HepG2 (cell line): ENCODE measurements at regions of chr2 and their contacts with region 1.

Region 1: GRCh38 chr2:207847807-207848544 is 78.3 kb upstream of the FZD5 start:
- DNase-seq: peak; percentile 99
- ATAC-seq: peak; percentile 83
- H3K4me3 ChIP-seq: peak overlapping the region; percentile 13 to 27 (median 25); a peak in 3 of 6 replicates
- H3K27ac ChIP-seq: peak overlapping the region; percentile 97
- H3K4me1 ChIP-seq: peaks cover 81% of the 10 kb centered on the region
- H3K27me3 ChIP-seq: no peaks in the 10 kb centered on the region
- CTCF ChIP-seq: peak; percentile 52
- EP300 ChIP-seq: peak; percentile 75 to 97
- POLR2A ChIP-seq: peak in 1 of 2 experiments; percentile 47; a peak in 1 of 4 replicates
- RAD21 ChIP-seq: peak; percentile 22; the same call in 1 of the 2 replicates

Region 2: DNA sequence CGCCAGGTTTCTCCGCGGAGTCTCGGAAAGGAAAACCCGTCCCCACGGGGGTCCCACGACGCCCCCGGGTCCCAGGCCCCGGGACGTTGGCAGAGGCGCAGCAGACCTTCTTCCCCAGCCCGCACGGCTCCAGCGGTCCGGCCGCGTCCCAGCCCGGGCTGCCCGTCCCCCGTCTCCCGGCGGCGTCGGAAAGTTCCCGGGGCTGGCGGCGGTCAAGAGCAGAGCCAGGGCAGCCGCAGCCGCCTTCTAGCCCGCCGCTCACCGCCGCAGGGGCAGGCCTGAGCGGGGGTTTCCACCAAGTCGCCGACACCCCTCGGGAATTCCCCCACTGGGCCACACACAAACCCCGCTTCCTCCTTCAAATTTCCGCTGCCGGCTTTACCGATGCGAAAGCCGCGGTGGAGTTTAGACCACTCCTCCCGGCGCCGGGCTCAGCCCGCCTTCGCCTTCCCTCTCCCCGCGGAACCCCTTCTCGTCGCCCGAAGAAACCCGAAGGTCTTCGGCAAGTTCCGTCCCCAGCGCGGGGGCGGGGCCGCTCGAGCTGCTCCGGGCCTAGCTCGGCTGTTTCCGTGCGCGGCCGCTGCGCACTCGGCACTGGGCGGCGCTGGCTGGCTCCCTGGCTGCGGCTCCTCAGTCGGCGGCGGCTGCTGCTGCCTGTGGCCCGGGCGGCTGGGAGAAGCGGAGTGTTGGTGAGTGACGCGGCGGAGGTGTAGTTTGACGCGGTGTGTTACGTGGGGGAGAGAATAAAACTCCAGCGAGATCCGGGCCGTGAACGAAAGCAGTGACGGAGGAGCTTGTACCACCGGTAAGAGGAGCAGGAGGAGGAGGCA is 318.4 kb before region 1 on chr2 and contains the start of gene CREB1:
- CTCF ChIA-PET with region 1: no interaction called
- POLR2A ChIA-PET with region 1: no interaction called
- in situ Hi-C with region 1: no loop called
- intact Hi-C with region 1: loop called (anchors 10 kb)
- DNase-seq: peak; percentile 94
- ATAC-seq: peak; percentile 96
- H3K4me3 ChIP-seq: peak within 1 kb of the TSS; percentile 93 to 98 (median 94)
- H3K27ac ChIP-seq: peak within 1 kb of the TSS; percentile 96
- H3K4me1 ChIP-seq: peaks cover 44% of the 10 kb centered on the region
- H3K27me3 ChIP-seq: no peaks in the 10 kb centered on the region; a peak in 1 of 5 replicates
- CTCF ChIP-seq: peak; percentile 73
- EP300 ChIP-seq: no peak; a peak in 1 of 4 replicates
- POLR2A ChIP-seq: peak; percentile 90 to 94
- RAD21 ChIP-seq: peak; percentile 30
- total RNA-seq, gene CREB1: 51.9 and 79.5 TPM in 2 replicates

Region 3: DNA sequence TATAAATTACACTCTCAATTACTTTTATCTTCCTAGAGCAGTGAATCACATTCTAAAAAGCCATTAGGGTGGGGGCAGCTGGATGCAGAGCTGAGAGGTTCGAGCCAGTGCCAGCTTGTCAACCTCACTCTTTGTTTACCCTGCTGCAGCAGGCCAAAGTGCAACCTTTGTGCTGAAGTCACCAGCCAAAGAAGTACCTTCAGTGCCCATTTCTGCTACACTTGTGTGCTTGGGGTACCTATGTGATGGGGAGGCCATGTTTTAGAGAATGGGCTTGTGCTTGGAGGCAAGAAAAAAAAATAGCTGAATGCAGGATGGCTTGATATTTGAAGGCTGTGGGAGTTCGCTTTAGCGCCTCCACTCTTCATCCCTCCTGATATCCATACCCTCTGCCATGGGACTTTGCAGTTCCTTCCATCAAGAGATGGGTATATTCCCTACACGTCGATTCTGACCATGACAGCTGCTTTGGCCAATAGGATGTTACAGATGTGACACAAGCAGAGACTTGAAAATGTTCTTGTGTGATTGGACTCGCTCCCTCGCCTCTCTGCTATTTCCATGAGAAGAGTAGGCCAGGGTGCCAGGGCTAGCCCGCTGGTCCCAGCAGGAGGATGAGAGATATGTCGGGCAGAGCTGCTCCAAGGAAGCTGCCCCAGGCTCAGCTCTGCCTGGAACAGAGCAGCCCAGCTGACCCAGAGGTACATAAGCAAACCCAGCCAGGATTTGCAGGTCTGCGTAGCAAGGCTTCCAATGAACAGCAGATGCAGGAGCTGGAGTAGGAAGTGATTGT is 65.5 kb before region 1 on chr2:
- CTCF ChIA-PET with region 1: no interaction called
- POLR2A ChIA-PET with region 1: interaction called, 19 read pairs
- in situ Hi-C with region 1: no loop called
- intact Hi-C with region 1: no loop called
- DNase-seq: peak; percentile 92
- ATAC-seq: peak; percentile 96
- H3K4me3 ChIP-seq: no peak overlapping the region
- H3K27ac ChIP-seq: peak overlapping the region; percentile 1
- H3K4me1 ChIP-seq: peaks cover 96% of the 10 kb centered on the region
- H3K27me3 ChIP-seq: no peaks in the 10 kb centered on the region
- CTCF ChIP-seq: peak; percentile 13; the same call in 1 of the 2 replicates
- EP300 ChIP-seq: peak in 1 of 2 experiments; percentile 63; a peak in 2 of 4 replicates
- POLR2A ChIP-seq: no peak
- RAD21 ChIP-seq: peak; percentile 21; the same call in 1 of the 2 replicates

Region 4: GRCh38 chr2:207813221-207813916 is 34.6 kb before region 1 on chr2:
- CTCF ChIA-PET with region 1: no interaction called
- POLR2A ChIA-PET with region 1: interaction called, 288 read pairs
- in situ Hi-C with region 1: no loop called
- intact Hi-C with region 1: loop called (anchors 5 kb)
- DNase-seq: no peak
- ATAC-seq: 0 out of 3 replicates have a peak, but pooled peaks have one; percentile 6
- H3K4me3 ChIP-seq: no peak overlapping the region
- H3K27ac ChIP-seq: no peak overlapping the region
- H3K4me1 ChIP-seq: peaks cover 88% of the 10 kb centered on the region
- H3K27me3 ChIP-seq: no peaks in the 10 kb centered on the region
- CTCF ChIP-seq: no peak; the same call in 1 of the 2 replicates
- EP300 ChIP-seq: no peak
- POLR2A ChIP-seq: no peak
- RAD21 ChIP-seq: 0 out of 2 replicates have a peak, but pooled peaks have one; percentile 12

Region 5: GRCh38 chr2:207833251-207833751 is 14.7 kb before region 1 on chr2:
- CTCF ChIA-PET with region 1: no interaction called
- POLR2A ChIA-PET with region 1: interaction called, 303 read pairs
- in situ Hi-C with region 1: no loop called
- intact Hi-C with region 1: loop called (anchors 1 kb)
- DNase-seq: peak; percentile 87
- ATAC-seq: peak; percentile 33
- H3K4me3 ChIP-seq: no peak overlapping the region
- H3K27ac ChIP-seq: peak overlapping the region; percentile 16
- H3K4me1 ChIP-seq: peaks cover 80% of the 10 kb centered on the region
- H3K27me3 ChIP-seq: no peaks in the 10 kb centered on the region
- CTCF ChIP-seq: no peak
- EP300 ChIP-seq: no peak; a peak in 1 of 4 replicates
- POLR2A ChIP-seq: no peak
- RAD21 ChIP-seq: no peak

Region 6: DNA sequence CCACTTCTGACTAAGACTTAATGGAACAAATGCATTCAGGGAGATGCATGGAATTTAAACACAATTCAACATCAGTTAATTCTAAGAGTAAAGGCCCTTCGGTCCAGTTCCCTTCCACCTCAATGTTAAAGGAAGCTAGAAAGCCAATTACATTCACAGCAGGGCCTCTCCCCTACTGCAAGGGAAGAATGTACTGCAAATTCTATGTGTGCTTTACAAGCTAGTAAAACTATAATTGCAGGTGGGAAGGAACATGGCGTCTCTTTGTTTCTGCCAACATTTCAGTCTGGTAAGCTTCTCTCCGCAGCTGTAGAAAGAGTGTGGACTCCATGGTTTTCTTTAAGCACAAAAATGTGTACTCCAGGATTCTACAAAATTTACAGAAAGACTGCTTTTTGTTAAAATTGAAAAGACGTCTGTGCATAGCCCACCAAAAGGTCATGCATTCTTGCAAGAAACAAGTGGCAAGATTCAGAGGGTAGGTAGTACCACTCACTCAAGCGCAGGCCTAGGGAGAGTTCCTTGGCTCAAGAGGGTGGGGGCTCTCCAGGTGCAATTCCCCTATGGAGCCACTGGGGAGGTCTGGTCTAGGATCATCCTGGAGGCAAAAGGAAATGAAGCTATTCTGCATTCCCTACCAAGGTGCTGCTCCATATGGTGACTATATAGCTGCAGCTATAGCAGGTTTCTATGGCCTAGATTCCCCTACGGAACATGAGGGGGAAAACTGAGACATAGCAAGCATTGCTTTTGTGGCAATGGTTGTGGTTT is 48.7 kb after region 1 on chr2:
- CTCF ChIA-PET with region 1: no interaction called
- POLR2A ChIA-PET with region 1: interaction called, 86 read pairs
- in situ Hi-C with region 1: no loop called
- intact Hi-C with region 1: loop called (anchors 1 kb)
- DNase-seq: peak; percentile 46
- ATAC-seq: peak; percentile 81
- H3K4me3 ChIP-seq: no peak overlapping the region; a peak in 1 of 6 replicates
- H3K27ac ChIP-seq: peak overlapping the region; percentile 88
- H3K4me1 ChIP-seq: peaks cover 81% of the 10 kb centered on the region
- H3K27me3 ChIP-seq: no peaks in the 10 kb centered on the region
- CTCF ChIP-seq: peak; percentile 30; the same call in 1 of the 2 replicates
- EP300 ChIP-seq: no peak
- POLR2A ChIP-seq: no peak
- RAD21 ChIP-seq: no peak

Region 7: DNA sequence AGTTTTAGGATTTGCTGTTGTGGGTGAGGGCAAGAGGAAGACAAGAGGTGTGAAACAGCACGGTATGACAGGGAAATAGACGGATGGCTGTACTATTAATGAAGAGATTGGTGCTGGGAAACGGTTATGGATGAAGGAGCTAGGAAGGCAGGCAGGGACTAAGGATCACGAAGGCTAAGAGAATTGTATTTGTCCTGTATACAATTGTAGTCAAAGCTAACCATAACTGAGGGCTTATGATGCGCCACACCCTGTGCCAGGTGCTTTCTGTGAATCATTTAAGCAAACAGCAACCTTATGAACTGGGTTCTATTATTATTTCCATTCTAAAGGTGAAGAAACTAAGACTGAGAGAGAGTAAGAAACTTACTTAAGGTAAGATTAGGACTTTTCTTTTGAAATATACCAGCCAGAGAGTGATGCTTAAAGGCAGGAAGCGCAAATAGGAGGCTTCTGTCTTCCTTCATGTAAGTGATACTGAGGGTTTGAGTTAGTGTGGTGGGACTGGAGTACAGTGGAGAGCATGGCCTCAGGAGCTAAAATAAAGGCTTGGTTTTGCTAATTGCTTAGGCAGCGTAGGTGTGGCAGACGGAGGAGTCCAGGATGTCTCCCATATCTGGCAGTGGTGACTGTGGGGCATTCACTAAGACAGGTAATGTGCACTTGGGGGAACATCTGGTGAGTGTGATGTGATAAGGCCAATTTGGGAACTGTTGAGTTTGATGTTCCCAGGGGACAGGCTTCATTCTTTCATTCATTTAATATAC is 91.5 kb after region 1 on chr2:
- CTCF ChIA-PET with region 1: no interaction called
- POLR2A ChIA-PET with region 1: interaction called, 70 read pairs
- in situ Hi-C with region 1: no loop called
- intact Hi-C with region 1: loop called (anchors 2 kb)
- DNase-seq: no peak
- ATAC-seq: no peak
- H3K4me3 ChIP-seq: no peak overlapping the region
- H3K27ac ChIP-seq: no peak overlapping the region
- H3K4me1 ChIP-seq: peaks cover 54% of the 10 kb centered on the region
- H3K27me3 ChIP-seq: no peaks in the 10 kb centered on the region
- CTCF ChIP-seq: no peak
- EP300 ChIP-seq: no peak
- POLR2A ChIP-seq: no peak
- RAD21 ChIP-seq: no peak